HAP-1 (cell line): ENCODE measurements at regions of chr17 and their contacts with region 1.

Region 1: GRCh38 chr17:49399995-49400394 is 14.7 kb downstream of the PHB1 start:
- DNase-seq: no peak
- H3K4me3 ChIP-seq: no peak overlapping the region
- H3K4me1 ChIP-seq: no peaks in the 10 kb centered on the region
- H3K27me3 ChIP-seq: no peaks in the 10 kb centered on the region

Region 2: DNA sequence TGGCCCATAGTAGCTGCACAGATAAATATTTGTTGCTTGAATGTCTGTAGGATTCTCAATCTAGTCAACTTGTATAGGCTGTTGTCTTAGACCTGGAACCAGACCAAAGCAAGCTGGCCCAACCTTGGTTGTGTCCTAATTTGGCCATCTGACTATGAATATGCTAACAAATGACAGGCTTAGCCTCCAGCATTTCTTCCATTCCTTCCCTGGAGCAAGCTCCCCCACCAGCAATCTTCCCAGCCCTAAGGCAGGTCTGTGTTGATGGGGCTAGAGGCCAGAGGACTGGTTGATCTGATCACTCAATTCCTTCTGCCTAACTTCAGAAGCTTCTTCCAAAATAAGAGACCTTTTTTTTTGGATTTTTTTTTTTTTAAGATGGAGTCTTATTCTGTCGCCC is 160.0 kb before region 1 on chr17:
- in situ Hi-C with region 1: no loop called
- DNase-seq: no peak
- H3K4me3 ChIP-seq: no peak overlapping the region
- H3K4me1 ChIP-seq: no peaks in the 10 kb centered on the region
- H3K27me3 ChIP-seq: no peaks in the 10 kb centered on the region

Region 3: GRCh38 chr17:49315551-49316257 is 84.3 kb before region 1 on chr17:
- in situ Hi-C with region 1: loop called (anchors 5 kb)
- DNase-seq: peak; percentile 69 to 79
- H3K4me3 ChIP-seq: no peak overlapping the region
- H3K4me1 ChIP-seq: peaks cover 12% of the 10 kb centered on the region
- H3K27me3 ChIP-seq: no peaks in the 10 kb centered on the region